Naive thymus-derived CD4-positive, alpha-beta T cell (primary cell): ENCODE measurements at regions of chr9 and their contacts with region 1.

Region 1: GRCh38 chr9:3732077-3733038 is 206.6 kb upstream of the RFX3 start:
- DNase-seq: peak in 7 of 9 donors; percentile 12 to 60 (median 41)
- ATAC-seq: peak; percentile 89
- H3K4me3 ChIP-seq: no peak overlapping the region
- H3K4me3 Mint-ChIP-seq: peak overlapping the region in 5 of 10 donors; percentile 9 to 53 (median 35)
- H3K27ac ChIP-seq: no peak overlapping the region
- H3K27ac Mint-ChIP-seq: peak overlapping the region in 1 of 9 donors; percentile 39
- H3K4me1 ChIP-seq: no peaks in the 10 kb centered on the region
- H3K4me1 Mint-ChIP-seq: peaks cover 0 to 18% (median 5%) of the 10 kb centered on the region in 7 donors
- H3K27me3 ChIP-seq: no peaks in the 10 kb centered on the region
- H3K27me3 Mint-ChIP-seq: no peaks in the 10 kb centered on the region

Region 2: DNA sequence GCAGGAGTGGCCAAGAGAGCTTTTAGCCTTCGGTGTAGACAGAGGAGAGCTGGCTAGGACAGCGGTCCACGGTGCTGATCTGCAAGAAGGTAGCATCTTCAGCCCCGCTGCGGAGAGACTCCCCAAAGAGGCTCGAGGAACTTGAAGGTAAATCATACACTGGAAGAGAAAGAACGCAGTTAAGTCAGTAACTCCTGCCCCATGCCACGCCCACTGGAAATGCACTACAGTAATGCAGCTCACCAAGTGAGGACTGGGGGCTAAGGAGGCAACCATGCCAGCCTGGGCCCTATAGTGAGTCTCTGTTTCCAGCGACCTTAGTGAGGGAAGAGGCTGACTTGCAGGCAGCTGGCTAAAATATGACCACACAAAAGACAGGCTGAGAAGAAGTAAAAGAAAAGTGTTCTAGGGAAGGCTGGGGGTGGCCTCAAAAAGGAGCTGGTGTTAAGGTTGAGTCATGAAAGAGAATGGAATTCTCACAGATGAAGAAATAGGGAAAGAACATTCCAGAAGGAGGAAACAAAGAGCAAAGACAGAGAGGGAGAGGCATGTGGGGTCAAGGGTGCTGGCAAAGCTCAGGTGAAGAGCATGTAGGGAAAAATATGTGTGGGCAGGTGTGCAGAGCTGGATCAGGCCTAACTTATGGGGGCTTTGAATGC is 96.0 kb after region 1 on chr9:
- CTCF ChIA-PET with region 1: no interaction called
- POLR2A ChIA-PET with region 1: no interaction called
- intact Hi-C with region 1: no loop called
- DNase-seq: no peak
- ATAC-seq: no peak
- H3K4me3 ChIP-seq: no peak overlapping the region
- H3K4me3 Mint-ChIP-seq: no peak overlapping the region
- H3K27ac ChIP-seq: no peak overlapping the region
- H3K27ac Mint-ChIP-seq: no peak overlapping the region
- H3K4me1 ChIP-seq: no peaks in the 10 kb centered on the region
- H3K4me1 Mint-ChIP-seq: peaks cover 0 to 5% (median 0%) of the 10 kb centered on the region in 7 donors
- H3K27me3 ChIP-seq: no peaks in the 10 kb centered on the region
- H3K27me3 Mint-ChIP-seq: no peaks in the 10 kb centered on the region

Region 3: DNA sequence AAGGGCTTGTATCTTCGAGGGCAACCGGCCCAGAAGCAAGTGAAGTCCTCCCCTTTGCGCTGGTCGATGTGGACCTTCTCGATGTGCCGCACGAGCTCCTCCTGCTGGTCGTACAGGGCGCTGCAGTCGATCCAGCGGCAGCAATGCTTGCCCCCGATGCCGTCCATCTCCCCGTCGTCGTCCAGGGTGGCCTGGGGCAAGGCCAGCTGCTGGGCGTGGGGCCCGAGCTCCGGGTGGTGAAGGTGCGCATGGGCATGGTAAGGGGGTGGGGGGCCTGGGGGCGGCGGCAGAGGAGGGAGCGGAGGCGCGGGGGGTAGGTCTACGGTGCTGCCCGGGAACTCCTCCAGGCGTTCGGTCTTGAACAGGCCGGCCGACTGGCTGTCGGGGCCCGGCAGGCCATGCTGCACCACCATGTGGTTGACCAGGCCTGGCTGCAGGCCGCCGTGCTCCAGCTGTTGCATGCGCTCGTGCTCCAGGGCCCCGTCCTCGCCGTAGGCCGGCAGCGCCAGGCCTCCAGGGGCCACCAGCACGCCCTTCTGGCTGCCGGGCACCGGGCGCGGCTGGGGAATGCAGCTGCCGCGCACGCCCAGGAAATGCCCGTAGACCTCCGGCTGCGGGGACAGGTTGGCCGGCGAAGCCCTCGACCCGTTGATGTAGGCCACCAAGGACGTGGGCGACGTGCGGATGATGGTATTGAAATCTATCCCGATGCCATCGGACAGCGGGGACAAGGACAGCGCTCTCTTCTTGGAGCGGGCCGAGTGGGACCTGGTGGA is 385.7 kb after region 1 on chr9:
- CTCF ChIA-PET with region 1: no interaction called
- POLR2A ChIA-PET with region 1: no interaction called
- intact Hi-C with region 1: loop called (anchors 1 to 5 kb)
- DNase-seq: peak in 7 of 9 donors; percentile 5 to 48 (median 13)
- ATAC-seq: no peak
- H3K4me3 ChIP-seq: no peak overlapping the region
- H3K4me3 Mint-ChIP-seq: no peak overlapping the region
- H3K27ac ChIP-seq: no peak overlapping the region
- H3K27ac Mint-ChIP-seq: no peak overlapping the region
- H3K4me1 ChIP-seq: no peaks in the 10 kb centered on the region
- H3K4me1 Mint-ChIP-seq: peaks cover 0 to 2% (median 0%) of the 10 kb centered on the region in 7 donors
- H3K27me3 ChIP-seq: no peaks in the 10 kb centered on the region
- H3K27me3 Mint-ChIP-seq: no peaks in the 10 kb centered on the region

Region 4: DNA sequence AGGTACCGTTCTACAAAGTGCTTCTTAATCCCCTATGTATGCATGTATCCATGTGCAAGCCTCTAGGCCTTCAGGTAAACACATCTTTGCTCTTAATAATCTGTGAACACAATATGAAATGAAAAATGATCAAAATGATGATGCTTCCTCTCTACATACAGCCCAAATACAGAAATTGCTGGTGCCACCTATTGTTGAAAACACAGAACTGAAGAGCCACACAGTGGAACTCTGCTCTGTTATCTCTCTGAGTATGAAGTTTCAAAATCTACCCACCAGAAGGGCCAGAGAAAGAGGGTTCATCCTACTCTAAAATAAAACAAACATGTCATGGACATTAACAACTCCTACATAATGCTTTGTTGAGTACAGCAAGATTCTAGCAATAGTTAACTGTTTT is 496.2 kb after region 1 on chr9:
- CTCF ChIA-PET with region 1: no interaction called
- POLR2A ChIA-PET with region 1: no interaction called
- intact Hi-C with region 1: loop called (anchors 1 to 5 kb)
- DNase-seq: peak in 1 of 9 donors; percentile 16
- ATAC-seq: peak; percentile 22
- H3K4me3 ChIP-seq: no peak overlapping the region
- H3K4me3 Mint-ChIP-seq: no peak overlapping the region
- H3K27ac ChIP-seq: no peak overlapping the region
- H3K27ac Mint-ChIP-seq: no peak overlapping the region
- H3K4me1 ChIP-seq: no peaks in the 10 kb centered on the region
- H3K4me1 Mint-ChIP-seq: peaks cover 0 to 28% (median 4%) of the 10 kb centered on the region in 7 donors
- H3K27me3 ChIP-seq: no peaks in the 10 kb centered on the region
- H3K27me3 Mint-ChIP-seq: peaks cover 0 to 10% (median 2%) of the 10 kb centered on the region in 5 donors

Region 5: DNA sequence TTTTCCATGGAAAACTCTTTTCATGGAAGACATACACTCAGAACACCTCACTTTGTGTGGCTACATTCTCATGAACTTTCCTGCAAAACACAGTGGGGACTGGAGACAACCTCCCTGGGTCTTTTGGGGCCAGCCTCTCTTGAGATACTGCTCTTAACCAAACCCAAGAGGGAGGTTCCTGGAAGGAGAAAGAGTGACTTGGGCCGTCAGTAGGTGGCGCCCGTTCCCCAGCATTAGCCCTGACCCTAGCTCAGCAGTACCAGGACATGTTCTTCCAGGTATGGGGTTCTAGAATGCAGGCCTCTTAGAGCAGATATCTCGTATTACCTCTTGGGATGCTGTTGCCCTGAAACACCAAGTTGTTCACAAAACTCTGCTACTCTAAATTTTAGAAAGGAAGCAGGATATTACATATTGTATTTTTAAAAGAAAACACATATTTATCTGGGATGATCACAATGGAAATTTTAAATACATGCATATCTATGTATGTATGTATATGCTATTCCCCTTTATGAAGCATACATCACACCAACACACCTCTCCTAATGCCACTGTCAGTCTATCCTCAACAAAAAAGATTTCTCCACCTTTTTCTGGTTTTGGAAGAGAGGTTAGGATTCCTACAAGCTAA is 583.3 kb after region 1 on chr9:
- CTCF ChIA-PET with region 1: no interaction called
- POLR2A ChIA-PET with region 1: no interaction called
- intact Hi-C with region 1: loop called (anchors 1 kb)
- DNase-seq: peak; percentile 37 to 74 (median 62)
- ATAC-seq: peak; percentile 89
- H3K4me3 ChIP-seq: no peak overlapping the region
- H3K4me3 Mint-ChIP-seq: no peak overlapping the region
- H3K27ac ChIP-seq: no peak overlapping the region
- H3K27ac Mint-ChIP-seq: no peak overlapping the region
- H3K4me1 ChIP-seq: no peaks in the 10 kb centered on the region
- H3K4me1 Mint-ChIP-seq: peaks cover 0 to 17% (median 6%) of the 10 kb centered on the region in 7 donors
- H3K27me3 ChIP-seq: no peaks in the 10 kb centered on the region
- H3K27me3 Mint-ChIP-seq: peaks cover 0 to 13% (median 0%) of the 10 kb centered on the region in 5 donors

Region 6: GRCh38 chr9:4339357-4339756 is 607.0 kb after region 1 on chr9:
- CTCF ChIA-PET with region 1: interaction called, 4 read pairs
- POLR2A ChIA-PET with region 1: no interaction called
- intact Hi-C with region 1: loop called (anchors 1 kb)
- DNase-seq: peak; percentile 62 to 84 (median 77)
- ATAC-seq: peak; percentile 90
- H3K4me3 ChIP-seq: no peak overlapping the region
- H3K4me3 Mint-ChIP-seq: peak overlapping the region in 9 of 10 donors; percentile 10 to 70 (median 48)
- H3K27ac ChIP-seq: no peak overlapping the region
- H3K27ac Mint-ChIP-seq: peak overlapping the region; percentile 16 to 92 (median 44)
- H3K4me1 ChIP-seq: no peaks in the 10 kb centered on the region
- H3K4me1 Mint-ChIP-seq: peaks cover 3 to 8% (median 7%) of the 10 kb centered on the region in 7 donors
- H3K27me3 ChIP-seq: no peaks in the 10 kb centered on the region
- H3K27me3 Mint-ChIP-seq: peaks cover 0 to 2% (median 0%) of the 10 kb centered on the region in 5 donors

Region 7: DNA sequence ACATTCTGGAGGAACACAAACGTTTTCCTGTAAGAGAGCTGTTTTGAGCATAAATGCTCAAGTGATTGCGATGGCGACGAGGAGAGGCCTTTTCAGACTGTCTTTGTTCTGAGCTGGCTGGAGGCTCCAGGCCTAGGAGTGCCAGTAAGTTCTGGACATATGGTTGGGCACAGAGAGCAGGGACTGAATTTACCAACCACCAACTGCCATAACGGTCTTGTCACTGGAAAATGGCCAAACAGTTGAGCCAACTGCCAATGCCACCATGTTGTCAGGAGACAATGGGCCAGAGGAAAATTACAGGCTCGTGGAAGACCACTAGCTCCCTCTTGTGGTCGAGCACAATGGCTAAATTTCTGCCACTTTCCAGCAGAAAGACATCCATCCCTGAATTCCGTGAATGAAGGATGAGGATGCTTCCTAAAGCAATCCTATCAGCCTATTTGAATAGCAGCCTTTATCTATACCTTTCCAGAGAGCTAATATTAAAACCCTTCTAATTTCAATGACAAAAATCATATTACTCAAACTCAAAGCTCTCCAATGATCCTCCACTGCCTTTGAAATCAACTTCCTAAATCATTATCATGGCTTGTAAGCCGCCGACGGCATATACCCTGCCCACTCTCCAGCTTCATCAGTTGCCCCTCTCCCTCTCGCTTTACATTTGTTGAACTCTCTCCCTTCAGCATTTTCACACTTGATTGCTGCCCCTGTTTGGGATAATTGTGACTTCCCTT is 634.4 kb after region 1 on chr9:
- CTCF ChIA-PET with region 1: interaction called, 8 read pairs
- POLR2A ChIA-PET with region 1: no interaction called
- intact Hi-C with region 1: loop called (anchors 1 to 5 kb)
- DNase-seq: peak in 5 of 9 donors; percentile 11 to 37 (median 23)
- ATAC-seq: no peak
- H3K4me3 ChIP-seq: no peak overlapping the region
- H3K4me3 Mint-ChIP-seq: no peak overlapping the region
- H3K27ac ChIP-seq: no peak overlapping the region
- H3K27ac Mint-ChIP-seq: no peak overlapping the region
- H3K4me1 ChIP-seq: no peaks in the 10 kb centered on the region
- H3K4me1 Mint-ChIP-seq: peaks cover 0 to 1% (median 0%) of the 10 kb centered on the region in 7 donors
- H3K27me3 ChIP-seq: no peaks in the 10 kb centered on the region
- H3K27me3 Mint-ChIP-seq: peaks cover 0 to 8% (median 0%) of the 10 kb centered on the region in 5 donors

Region 8: DNA sequence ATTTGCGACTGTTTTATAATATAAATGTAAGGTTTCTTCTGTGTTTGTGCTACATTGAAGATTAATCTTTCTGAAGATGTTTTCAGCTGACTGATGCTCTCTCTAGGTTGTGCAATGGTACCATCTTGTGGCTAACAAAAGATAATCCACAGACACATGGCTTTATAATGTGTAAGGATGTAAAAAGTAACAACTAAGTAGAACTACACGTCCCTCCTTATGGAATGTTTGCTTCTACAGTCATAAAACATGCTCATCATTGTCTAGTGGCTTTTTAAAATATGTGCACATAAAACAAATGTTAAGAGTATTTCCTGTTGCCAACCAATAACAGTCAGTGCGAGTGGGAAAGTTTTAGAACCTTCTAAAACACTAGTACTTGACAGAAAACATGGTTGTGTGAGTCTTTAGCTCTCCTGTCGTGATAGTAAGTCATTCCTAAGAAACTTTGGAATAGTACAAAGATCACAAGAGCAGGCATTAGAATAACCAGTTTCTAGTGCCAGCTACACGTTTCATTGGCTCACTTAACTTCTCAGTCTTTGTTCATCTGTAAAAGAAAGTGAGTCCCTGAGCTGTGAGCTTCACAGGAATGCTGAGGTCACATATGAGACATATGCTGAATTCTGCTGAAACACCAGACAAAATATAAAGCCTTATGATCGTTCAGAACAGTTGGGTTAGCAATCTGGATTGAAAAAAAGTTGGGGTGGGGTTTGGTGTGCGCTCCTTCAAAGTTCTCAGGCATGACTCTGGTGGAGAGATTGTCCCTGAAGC is 643.3 kb after region 1 on chr9:
- CTCF ChIA-PET with region 1: no interaction called
- POLR2A ChIA-PET with region 1: no interaction called
- intact Hi-C with region 1: loop called in 1 of 2 experiments (anchors 1 kb)
- DNase-seq: peak in 4 of 9 donors; percentile 24 to 32 (median 30)
- ATAC-seq: peak; percentile 55
- H3K4me3 ChIP-seq: no peak overlapping the region
- H3K4me3 Mint-ChIP-seq: no peak overlapping the region
- H3K27ac ChIP-seq: no peak overlapping the region
- H3K27ac Mint-ChIP-seq: peak overlapping the region in 1 of 9 donors; percentile 55
- H3K4me1 ChIP-seq: no peaks in the 10 kb centered on the region
- H3K4me1 Mint-ChIP-seq: no peaks in the 10 kb centered on the region
- H3K27me3 ChIP-seq: peaks cover 0 to 4% of the 10 kb centered on the region in 2 donors
- H3K27me3 Mint-ChIP-seq: peaks cover 0 to 22% (median 11%) of the 10 kb centered on the region in 5 donors

Region 9: GRCh38 chr9:4984621-4985385 is 1252.4 kb after region 1 on chr9 and contains the start of gene JAK2:
- CTCF ChIA-PET with region 1: no interaction called
- POLR2A ChIA-PET with region 1: no interaction called
- intact Hi-C with region 1: no loop called
- DNase-seq: peak; percentile 62 to 85 (median 72)
- ATAC-seq: peak; percentile 87
- H3K4me3 ChIP-seq: peak within 1 kb of the TSS; percentile 52
- H3K4me3 Mint-ChIP-seq: peak within 1 kb of the TSS; percentile 83 to 98 (median 94)
- H3K27ac ChIP-seq: peak within 1 kb of the TSS; percentile 78
- H3K27ac Mint-ChIP-seq: peak within 1 kb of the TSS; percentile 80 to 94 (median 90)
- H3K4me1 ChIP-seq: peaks cover 20 to 32% of the 10 kb centered on the region in 2 donors
- H3K4me1 Mint-ChIP-seq: peaks cover 20 to 41% (median 26%) of the 10 kb centered on the region in 7 donors
- H3K27me3 ChIP-seq: no peaks in the 10 kb centered on the region
- H3K27me3 Mint-ChIP-seq: no peaks in the 10 kb centered on the region
- total RNA-seq, gene JAK2: 11.7 to 76.0 (median 17.5) TPM